Mammary epithelial cell (primary cell): ENCODE measurements at regions of chr15 and their contacts with region 1.

Region 1: GRCh38 chr15:101115786-101116680 is 135.8 kb downstream of the CHSY1 start:
- DNase-seq: no peak
- H3K4me3 ChIP-seq: no peak overlapping the region
- H3K27ac ChIP-seq: no peak overlapping the region
- H3K4me1 ChIP-seq: peaks cover 25% of the 10 kb centered on the region
- H3K27me3 ChIP-seq: no peaks in the 10 kb centered on the region
- CTCF ChIP-seq: no peak

Region 2: GRCh38 chr15:100879464-100880138 is 236.4 kb before region 1 on chr15 and contains the start of gene ALDH1A3:
- CTCF ChIA-PET with region 1: no interaction called
- dilution Hi-C with region 1: no loop called
- in situ Hi-C with region 1: no loop called
- intact Hi-C with region 1: no loop called
- DNase-seq: peak; percentile 81
- H3K4me3 ChIP-seq: peak within 1 kb of the TSS; percentile 68 to 77 (median 70)
- H3K27ac ChIP-seq: peak within 1 kb of the TSS; percentile 26
- H3K4me1 ChIP-seq: peaks cover 36% of the 10 kb centered on the region
- H3K27me3 ChIP-seq: no peaks in the 10 kb centered on the region
- CTCF ChIP-seq: no peak
- total RNA-seq, gene ALDH1A3: 284 to 347 TPM

Region 3: DNA sequence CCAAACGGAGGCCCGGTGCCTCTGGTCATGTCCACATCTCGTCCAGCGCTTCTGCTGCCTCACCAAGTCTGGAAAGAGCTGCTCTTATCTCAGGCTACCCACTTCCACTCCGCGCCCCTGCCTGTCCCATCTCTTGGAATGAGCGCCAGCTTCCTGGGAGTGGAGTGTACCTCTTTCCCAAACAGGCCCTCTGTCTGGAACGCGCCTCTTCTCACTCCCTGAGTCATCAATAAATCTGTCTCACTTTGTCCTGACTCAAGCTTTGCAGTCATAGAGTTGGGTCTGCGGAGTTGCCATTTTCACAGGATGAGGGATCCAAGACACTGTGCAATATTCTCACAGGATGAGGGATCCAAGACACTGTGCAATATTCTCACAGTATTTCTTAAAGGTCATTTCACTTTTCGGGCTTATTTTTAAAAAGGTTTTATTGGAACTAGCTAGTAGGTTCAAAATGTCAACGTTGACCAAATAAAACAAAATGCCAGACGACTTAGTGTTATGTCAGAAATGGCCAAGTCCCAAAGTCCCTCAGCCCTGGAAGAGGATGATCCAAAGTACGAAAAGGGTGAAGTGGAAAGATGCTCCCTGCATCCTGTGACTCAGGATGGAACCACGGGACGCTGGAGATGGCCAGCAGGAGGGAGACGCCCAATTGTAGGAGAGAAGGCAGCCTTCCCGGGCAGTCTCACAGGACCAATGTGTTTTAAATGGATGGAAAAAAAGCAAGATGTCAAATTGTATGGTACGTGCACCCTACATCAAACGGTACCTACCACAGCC is 54.7 kb after region 1 on chr15:
- CTCF ChIA-PET with region 1: no interaction called
- dilution Hi-C with region 1: no loop called
- in situ Hi-C with region 1: loop called in 1 of 2 experiments (anchors 10 kb)
- intact Hi-C with region 1: no loop called
- DNase-seq: peak; percentile 75
- H3K4me3 ChIP-seq: no peak overlapping the region
- H3K27ac ChIP-seq: no peak overlapping the region
- H3K4me1 ChIP-seq: peaks cover 59% of the 10 kb centered on the region
- H3K27me3 ChIP-seq: no peaks in the 10 kb centered on the region
- CTCF ChIP-seq: no peak

Region 4: GRCh38 chr15:101193120-101193644 is 77.1 kb after region 1 on chr15:
- CTCF ChIA-PET with region 1: no interaction called
- dilution Hi-C with region 1: loop called (anchors 5 kb)
- in situ Hi-C with region 1: no loop called
- intact Hi-C with region 1: no loop called
- DNase-seq: no peak
- H3K4me3 ChIP-seq: no peak overlapping the region
- H3K27ac ChIP-seq: no peak overlapping the region
- H3K4me1 ChIP-seq: peaks cover 19% of the 10 kb centered on the region
- H3K27me3 ChIP-seq: no peaks in the 10 kb centered on the region
- CTCF ChIP-seq: no peak

Region 5: DNA sequence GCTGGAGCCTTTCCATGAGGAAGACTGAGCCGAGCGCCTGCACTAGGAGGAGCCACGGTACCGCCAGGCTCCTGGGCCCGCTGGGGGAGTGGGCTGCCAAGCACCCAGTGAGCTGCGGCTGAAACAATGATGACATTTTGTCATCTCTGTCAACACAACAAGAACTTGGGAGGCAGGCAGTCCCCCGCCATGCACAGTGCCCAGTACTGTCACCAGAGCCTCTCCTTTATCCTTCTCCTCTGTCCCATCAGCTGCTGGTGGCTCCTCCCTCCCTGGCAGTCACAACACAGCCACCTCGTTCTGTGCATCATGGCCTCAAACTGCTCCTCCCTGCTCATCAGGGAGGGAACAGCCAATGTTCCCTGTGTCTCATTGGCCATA is 407.5 kb after region 1 on chr15:
- CTCF ChIA-PET with region 1: no interaction called
- dilution Hi-C with region 1: no loop called
- in situ Hi-C with region 1: no loop called
- intact Hi-C with region 1: no loop called
- DNase-seq: no peak
- H3K4me3 ChIP-seq: no peak overlapping the region
- H3K27ac ChIP-seq: no peak overlapping the region
- H3K4me1 ChIP-seq: no peaks in the 10 kb centered on the region
- H3K27me3 ChIP-seq: peaks cover 2% of the 10 kb centered on the region
- CTCF ChIP-seq: no peak